ENCODE measurements at regions of chr17 and their contacts with region 1.

Region 1: DNA sequence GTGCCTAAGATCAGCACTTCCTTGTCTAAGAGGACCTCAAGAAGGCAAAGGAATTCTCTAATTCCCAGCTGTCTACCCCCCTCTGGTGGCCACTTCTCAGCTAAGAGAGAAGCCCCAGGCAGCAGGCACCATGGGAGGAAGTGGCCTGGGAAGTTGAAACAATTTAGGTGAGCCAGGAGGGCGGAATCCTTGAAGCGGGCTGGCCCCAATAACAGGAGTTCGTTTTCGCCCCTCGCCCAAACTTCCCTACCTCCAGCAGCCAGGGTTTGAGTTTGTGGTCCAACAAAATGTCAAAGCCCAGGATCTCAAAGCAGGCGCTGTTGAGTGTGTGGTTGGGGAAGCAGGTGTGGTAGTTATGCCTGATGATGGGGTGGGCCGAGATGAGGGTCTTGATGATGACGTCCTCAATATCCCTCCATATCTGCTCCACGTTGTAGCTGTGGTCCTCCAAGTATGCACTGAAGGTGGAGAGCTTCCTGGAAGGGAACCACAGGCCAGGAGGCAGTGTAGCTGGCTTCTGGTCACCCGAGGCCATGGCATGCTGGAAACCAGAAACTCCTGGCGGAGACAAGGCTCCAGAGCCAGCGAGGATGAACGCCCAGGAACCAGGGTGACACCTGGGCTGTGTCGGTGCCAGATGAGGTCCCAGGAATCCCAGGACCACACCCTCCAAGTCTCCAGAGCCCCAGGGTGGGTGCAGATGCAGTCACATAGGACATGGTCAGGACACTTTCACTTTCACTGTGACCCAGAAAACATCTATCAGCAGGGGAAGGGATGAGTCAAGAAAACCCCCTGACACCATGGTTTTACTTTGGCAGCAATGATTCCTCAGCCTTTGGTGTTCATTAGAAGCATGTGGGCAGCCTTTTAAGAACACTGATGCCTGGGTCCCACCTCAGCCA is 25.6 kb downstream of the TTLL6 start:
- ATAC-seq: peak; percentile 66 to 98 (median 82)
- H3K4me3 ChIP-seq: no peak overlapping the region
- H3K27ac ChIP-seq: no peak overlapping the region
- H3K4me1 ChIP-seq: peaks cover 6 to 10% of the 10 kb centered on the region in 2 donors

Region 2: DNA sequence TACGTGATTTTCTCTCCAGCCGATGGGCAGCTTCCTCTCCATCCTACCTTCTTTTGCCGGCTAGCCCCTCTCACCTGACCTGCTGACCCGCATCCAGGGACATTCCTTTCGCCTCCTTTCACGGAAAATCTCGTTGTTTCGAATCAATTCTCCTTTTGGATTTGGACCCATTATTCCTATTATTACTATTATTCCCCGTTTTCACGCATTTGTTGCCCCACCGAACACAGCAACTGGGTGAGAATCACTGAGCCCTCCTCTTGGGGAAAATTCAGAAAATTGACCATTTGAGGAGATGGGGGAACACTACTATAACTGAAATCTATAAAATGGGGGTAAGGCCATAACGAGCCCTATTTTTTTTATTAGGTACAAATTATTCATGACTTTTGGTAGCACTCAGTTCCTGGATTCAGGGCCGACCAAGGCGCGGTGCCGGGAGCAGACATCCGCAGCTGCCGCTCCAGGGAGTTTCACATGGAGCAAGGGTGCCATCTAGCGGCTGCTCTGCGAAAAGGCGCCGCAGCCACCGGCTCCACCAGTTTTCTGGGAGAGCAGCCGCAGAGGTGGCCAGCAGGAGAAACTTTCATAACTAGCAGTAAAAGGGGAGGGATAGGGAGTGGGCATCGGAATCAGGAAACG is 173.0 kb before region 1 on chr17:
- in situ Hi-C with region 1: no loop called
- ATAC-seq: peak; percentile 57 to 91 (median 60)
- H3K4me3 ChIP-seq: peak overlapping the region; percentile 26 to 89 (median 80)
- H3K27ac ChIP-seq: peak overlapping the region in 1 of 2 donors; percentile 97
- H3K4me1 ChIP-seq: peaks cover 31 to 55% of the 10 kb centered on the region in 2 donors

Region 3: GRCh38 chr17:48678141-48678971 is 113.0 kb before region 1 on chr17:
- in situ Hi-C with region 1: loop called in 1 of 9 experiments (anchors 10 kb)
- ATAC-seq: peak; percentile 58 to 99 (median 84)
- H3K4me3 ChIP-seq: no peak overlapping the region
- H3K27ac ChIP-seq: no peak overlapping the region
- H3K4me1 ChIP-seq: no peaks in the 10 kb centered on the region

Region 4: GRCh38 chr17:48724251-48725003 is 67.0 kb before region 1 on chr17:
- in situ Hi-C with region 1: loop called in 1 of 9 experiments (anchors 10 kb)
- ATAC-seq: peak; percentile 84 to 92 (median 90)
- H3K4me3 ChIP-seq: no peak overlapping the region
- H3K27ac ChIP-seq: no peak overlapping the region
- H3K4me1 ChIP-seq: peaks cover 0 to 7% of the 10 kb centered on the region in 2 donors